OCI-LY7 (cell line): ENCODE measurements at regions of chr5 and their contacts with region 1.

Region 1: DNA sequence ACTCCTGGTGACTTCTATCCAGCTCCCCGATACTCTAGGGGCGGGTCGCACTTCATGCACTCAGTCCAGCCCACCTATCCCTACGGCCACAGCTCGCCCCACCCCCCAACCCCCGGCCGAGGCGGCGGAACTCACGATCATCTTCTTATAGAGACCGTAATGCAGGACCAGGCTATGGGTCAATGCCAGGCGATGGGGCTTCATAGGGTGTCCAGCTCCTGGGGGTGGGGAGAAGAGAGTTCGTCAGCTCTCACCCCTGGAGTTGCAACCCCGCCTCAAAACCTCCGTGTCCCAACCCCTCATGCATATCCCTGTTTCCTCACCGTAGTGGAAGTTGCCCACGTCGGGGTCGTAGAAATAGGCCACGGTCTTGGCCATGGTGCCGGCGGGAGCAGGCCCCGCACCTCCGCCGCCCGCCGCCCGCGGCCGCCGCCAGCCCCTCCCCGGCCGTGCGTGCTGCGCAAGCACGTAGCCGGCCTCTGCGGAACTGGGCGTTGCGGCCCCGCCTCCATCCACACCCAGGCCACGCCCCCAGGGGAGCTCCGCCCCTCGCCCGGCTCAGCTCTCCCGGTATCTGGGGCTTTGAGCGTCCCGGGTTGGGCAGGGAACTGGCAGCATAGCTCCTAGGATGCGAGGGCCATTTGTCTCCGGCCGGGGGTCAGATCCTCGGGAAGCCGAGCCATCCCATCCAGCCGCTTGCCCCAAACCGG is at the starts of genes HDAC3 and RELL2:
- DNase-seq: peak; percentile 92
- H3K4me3 ChIP-seq: peak within 1 kb of the TSS; percentile 98
- H3K27ac ChIP-seq: peak within 1 kb of the TSS; percentile 59
- H3K4me1 ChIP-seq: peaks cover 34% of the 10 kb centered on the region
- CTCF ChIP-seq: no peak
- total RNA-seq, gene HDAC3: 78.8 and 85.4 TPM in 2 replicates
- total RNA-seq, gene RELL2: 28.0 and 29.8 TPM in 2 replicates

Region 2: DNA sequence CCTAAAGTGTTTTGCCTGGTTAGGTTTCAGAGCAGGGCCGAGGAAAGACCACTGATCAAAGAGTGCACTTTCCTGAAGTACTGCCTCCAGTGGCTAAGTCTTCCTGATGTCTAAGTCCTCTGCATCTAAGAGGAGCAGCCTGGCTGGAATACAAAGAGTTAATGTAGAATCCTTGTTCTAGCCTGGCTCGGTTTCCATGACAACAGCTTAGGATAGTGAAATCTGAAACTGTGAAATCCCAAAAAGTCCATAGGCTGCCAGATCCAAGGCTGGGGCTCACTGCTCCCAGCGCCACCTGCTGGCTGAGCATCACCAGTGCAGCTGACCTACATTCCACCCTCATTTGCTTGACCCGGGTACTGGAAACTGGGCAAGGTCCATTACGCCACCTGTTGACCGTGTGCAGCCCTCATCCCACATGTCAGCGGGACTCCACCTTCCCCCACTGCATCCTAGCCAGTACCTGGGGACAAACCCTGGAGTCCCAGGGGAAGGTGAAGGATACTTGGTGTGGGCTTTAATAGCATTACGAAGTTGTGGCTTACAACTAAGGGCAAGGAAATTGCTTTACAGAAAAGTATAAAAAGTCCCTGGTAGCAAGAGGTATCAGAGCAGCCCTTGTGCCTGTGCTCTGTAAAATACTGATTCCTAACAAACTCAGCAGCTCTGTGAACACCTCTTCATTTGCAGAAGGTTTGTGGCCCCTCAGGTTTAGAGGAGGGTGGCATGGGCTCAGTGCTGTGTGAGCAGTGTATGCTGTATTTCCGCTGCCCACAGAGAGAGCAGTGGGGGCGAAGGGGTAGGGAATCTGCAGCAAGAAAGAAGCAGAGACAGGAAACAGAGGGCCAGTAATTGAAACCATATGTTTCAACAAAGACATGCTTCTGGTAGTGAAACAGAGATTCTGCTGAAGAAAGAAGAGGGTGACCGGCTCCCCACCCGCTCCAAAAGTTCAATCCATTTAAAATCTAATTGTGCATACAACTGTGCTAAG is 111.7 kb before region 1 on chr5:
- CTCF ChIA-PET with region 1: no interaction called
- POLR2A ChIA-PET with region 1: interaction called, 3 read pairs
- intact Hi-C with region 1: loop called (anchors 5 kb)
- DNase-seq: peak; percentile 77
- H3K4me3 ChIP-seq: peak overlapping the region; percentile 42
- H3K27ac ChIP-seq: peak overlapping the region; percentile 98
- H3K4me1 ChIP-seq: peaks cover 84% of the 10 kb centered on the region
- CTCF ChIP-seq: peak; percentile 100

Region 3: DNA sequence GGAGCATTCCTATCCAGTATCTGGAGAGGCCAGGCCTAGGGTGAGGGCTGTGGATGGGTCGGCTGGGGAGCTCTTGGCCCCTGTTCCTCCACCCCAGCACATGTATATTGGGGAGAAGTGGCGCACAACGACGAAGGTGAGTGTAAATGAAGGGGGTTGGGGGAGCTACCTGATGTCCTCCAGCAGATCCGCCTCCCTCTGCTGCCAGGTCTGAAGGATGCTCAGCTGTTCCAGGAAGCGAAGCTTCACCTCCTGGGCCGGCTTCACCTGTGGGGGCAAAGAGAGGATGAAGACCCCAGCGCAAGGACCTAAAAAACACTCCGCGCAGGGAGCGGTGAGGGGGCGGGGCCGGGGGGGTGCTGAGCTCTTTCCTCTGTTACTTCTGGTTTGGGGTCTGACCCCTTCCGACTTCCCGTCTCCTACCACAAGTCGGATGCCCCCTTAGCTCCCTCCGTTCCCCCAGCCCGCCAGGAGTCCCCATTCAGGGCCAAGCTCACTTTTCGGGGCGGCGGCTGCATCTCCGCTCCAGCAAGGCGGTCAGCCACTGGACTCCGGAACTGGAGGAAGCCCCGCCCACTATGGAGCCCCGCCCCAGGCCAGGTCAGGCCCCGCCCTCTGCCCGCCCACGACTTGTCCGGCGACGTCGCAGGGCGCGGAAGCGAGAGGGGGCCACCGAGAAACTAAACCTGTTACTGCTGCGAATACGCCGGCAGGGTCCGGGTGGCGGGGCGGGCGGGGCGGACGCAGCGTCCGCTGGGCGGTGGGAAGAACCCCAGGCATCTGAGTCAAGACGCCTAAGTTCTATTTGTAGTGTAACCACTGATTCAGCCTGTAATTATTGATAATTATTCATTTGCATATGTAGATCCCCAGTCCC is 14.5 kb after region 1 on chr5 and contains the start of gene FCHSD1:
- CTCF ChIA-PET with region 1: interaction called, 4 read pairs
- POLR2A ChIA-PET with region 1: interaction called, 18 read pairs
- intact Hi-C with region 1: no loop called
- DNase-seq: peak; percentile 87
- H3K4me3 ChIP-seq: peak within 1 kb of the TSS; percentile 73
- H3K27ac ChIP-seq: no peak within 1 kb of the TSS
- H3K4me1 ChIP-seq: peaks cover 13% of the 10 kb centered on the region
- CTCF ChIP-seq: no peak
- total RNA-seq, gene FCHSD1: 31.9 and 49.0 TPM in 2 replicates

Region 4: GRCh38 chr5:141762790-141763368 is 126.3 kb after region 1 on chr5:
- CTCF ChIA-PET with region 1: no interaction called
- POLR2A ChIA-PET with region 1: no interaction called
- intact Hi-C with region 1: no loop called
- DNase-seq: no peak
- H3K4me3 ChIP-seq: no peak overlapping the region
- H3K27ac ChIP-seq: no peak overlapping the region
- H3K4me1 ChIP-seq: no peaks in the 10 kb centered on the region
- CTCF ChIP-seq: no peak; the same call in 1 of the 2 replicates

Region 5: GRCh38 chr5:142046191-142046590 is 409.6 kb after region 1 on chr5:
- CTCF ChIA-PET with region 1: no interaction called
- POLR2A ChIA-PET with region 1: no interaction called
- intact Hi-C with region 1: no loop called
- DNase-seq: no peak
- H3K4me3 ChIP-seq: no peak overlapping the region
- H3K27ac ChIP-seq: no peak overlapping the region
- H3K4me1 ChIP-seq: no peaks in the 10 kb centered on the region
- CTCF ChIP-seq: no peak